MCF 10A (cell line): ENCODE measurements at regions of chr3 and their contacts with region 1.

Region 1: GRCh38 chr3:48694610-48695392 is 9.1 kb upstream of the NCKIPSD start:
- DNase-seq: peak; percentile 97
- H3K4me3 Mint-ChIP-seq: peak overlapping the region; percentile 85
- H3K27ac Mint-ChIP-seq: peak overlapping the region; percentile 89
- H3K4me1 Mint-ChIP-seq: peaks cover 27% of the 10 kb centered on the region
- H3K27me3 Mint-ChIP-seq: no peaks in the 10 kb centered on the region
- CTCF ChIP-seq: no peak

Region 2: DNA sequence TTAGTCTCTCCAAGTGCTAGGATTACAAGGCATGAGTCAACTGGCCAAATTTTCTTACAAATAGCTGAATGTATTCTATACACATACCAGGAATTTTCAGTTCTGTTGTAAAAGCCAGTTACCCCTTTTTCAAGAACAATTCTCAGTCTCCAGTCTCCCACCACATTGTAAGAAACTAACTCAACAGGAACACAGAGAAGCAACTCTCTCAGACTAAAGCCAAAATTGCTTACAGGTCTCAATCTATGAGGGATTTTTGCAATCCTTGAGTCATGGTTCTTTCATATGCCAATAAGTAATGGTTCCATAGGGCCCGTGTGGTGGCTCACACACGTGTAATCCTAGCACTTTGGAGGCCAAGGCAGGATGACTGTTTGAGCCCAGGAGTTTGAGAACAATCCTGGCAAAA is 13.7 kb after region 1 on chr3:
- CTCF ChIA-PET with region 1: interaction called, 6 read pairs
- POLR2A ChIA-PET with region 1: interaction called, 114 read pairs
- intact Hi-C with region 1: no loop called
- DNase-seq: peak; percentile 72
- H3K4me3 Mint-ChIP-seq: peak overlapping the region; percentile 53
- H3K27ac Mint-ChIP-seq: peak overlapping the region; percentile 96
- H3K4me1 Mint-ChIP-seq: peaks cover 21% of the 10 kb centered on the region
- H3K27me3 Mint-ChIP-seq: no peaks in the 10 kb centered on the region
- CTCF ChIP-seq: no peak